ENCODE measurements at regions of chr1 and their contacts with region 1.

Region 1: DNA sequence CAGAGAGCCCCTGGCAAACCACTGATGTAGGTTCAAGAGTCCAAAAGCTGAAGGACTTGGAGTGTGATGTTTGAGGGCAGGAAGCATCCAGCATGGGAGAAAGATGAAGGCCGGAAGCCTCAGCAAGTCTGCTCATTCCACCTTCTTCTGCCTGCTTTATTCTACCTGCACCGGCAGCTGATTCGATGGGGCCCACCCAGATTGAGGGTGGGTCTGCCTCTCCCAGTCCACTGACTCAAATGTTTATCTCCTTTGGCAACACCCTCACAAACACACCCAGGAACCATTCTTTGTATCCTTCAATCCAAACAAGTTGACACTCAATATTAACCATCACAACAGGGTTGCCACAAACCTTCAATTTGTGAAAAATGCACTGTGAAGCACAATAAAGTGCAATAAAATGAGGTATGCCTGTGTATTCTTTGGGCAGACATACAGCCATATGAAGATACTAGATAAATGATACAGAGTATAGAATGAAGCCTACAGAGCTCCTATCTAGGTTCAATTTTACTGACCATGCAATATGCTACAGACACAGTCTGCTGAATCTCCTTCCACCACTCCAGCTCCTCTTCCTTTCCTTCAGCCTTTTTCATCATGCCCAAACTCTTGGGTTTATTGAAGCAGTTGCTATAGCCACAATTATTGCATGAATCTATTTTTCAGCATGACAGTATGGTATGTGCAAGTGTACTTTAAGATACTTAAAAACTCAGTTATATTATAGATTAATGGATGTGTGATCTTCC is 24.0 kb upstream of the CDC42BPA start:
- DNase-seq: no peak
- H3K4me3 ChIP-seq: no peak overlapping the region
- H3K27ac ChIP-seq: no peak overlapping the region
- H3K27me3 ChIP-seq: no peaks in the 10 kb centered on the region
- CTCF ChIP-seq: no peak

Region 2: GRCh38 chr1:227330684-227331083 is 11.6 kb before region 1 on chr1:
- CTCF ChIA-PET with region 1: interaction called, 11 read pairs
- POLR2A ChIA-PET with region 1: interaction called, 3 read pairs
- DNase-seq: no peak
- H3K4me3 ChIP-seq: no peak overlapping the region
- H3K27ac ChIP-seq: no peak overlapping the region
- H3K27me3 ChIP-seq: no peaks in the 10 kb centered on the region
- CTCF ChIP-seq: no peak